ENCODE measurements at regions of chr12 and their contacts with region 1.

Region 1: DNA sequence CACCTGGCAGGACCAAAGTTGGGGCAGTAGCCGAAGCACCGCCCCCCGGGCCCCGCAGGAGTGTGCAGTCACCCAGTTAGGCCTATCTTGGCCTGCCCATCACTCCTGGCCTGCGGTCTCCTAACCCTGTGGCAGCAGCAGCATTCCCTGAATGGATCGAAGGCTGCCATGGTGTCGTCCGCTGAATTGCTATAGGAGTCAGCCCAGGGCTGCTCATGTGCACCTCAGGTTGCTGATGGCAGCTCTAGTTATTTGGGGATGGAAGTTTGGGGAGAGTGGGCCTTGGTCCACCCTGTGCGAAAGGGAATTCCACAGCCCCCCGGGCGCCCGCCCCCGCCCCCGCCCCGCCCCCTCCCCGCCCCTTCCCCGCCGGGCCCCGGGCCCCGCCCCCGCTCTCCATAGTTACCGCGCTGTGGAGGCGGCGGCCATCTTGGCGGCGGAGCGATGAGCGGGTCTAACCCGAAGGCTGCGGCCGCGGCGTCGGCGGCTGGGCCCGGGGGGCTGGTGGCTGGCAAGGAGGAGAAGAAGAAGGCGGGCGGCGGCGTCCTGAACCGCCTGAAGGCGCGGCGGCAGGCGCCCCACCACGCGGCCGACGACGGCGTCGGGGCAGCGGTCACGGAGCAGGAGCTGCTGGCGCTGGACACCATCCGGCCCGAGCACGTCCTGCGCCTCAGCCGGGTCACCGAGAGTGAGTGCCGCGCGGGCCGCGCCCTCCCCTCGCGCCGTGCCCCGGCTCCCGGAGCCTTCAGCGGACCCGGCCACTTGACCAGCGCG is at the start of gene UNC119B:
- DNase-seq: peak; percentile 65 to 96 (median 74)
- ATAC-seq: peak; percentile 89
- H3K4me3 ChIP-seq: peak within 1 kb of the TSS; percentile 84 to 88
- H3K27ac ChIP-seq: peak within 1 kb of the TSS; percentile 83 to 88
- H3K4me1 ChIP-seq: peaks cover 12 to 41% of the 10 kb centered on the region in 2 donors
- H3K27me3 ChIP-seq: no peaks in the 10 kb centered on the region
- CTCF ChIP-seq: no peak
- polyA plus RNA-seq, gene UNC119B: 45.2 to 63.2 (median 55.7) TPM

Region 2: DNA sequence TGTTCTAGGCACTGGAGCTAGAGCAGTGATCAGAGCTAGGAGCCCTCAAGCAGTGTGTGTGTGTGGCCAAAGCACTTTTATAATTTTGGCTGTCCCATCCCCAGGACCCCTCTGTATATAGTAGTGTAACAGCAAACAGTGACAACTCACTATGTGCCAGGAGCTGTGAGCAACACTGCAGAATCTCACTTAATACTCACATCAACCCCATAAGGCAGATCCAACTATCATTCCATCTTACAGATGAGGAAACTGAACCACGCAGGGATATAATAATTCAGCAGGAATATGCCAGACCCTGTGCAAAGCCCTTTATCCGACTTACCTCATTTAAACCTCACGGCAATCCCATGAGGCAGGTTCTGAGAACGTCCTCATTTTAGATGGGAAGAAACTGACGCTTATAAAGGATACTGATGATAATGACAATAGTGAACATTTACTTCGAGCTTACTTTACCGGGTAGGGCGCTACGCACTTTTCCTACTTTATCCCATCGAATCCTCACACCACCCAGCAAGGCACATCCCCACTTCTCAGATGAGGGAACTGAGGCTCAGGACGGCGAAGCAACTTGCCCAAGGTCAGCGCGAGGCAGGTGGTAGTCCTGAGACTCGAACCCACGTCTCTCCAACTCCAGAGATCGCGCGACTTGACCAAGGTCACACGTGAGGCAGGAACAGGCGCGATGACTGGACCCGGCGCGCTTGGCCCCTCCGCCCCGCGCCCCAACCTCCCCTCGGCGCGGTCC is 594.4 kb before region 1 on chr12:
- intact Hi-C with region 1: no loop called
- DNase-seq: peak in 1 of 4 donors; percentile 81
- ATAC-seq: no peak
- H3K4me3 ChIP-seq: peak overlapping the region; percentile 68 to 96
- H3K27ac ChIP-seq: peak overlapping the region; percentile 90 to 96
- H3K4me1 ChIP-seq: peaks cover 23 to 83% of the 10 kb centered on the region in 2 donors
- H3K27me3 ChIP-seq: no peaks in the 10 kb centered on the region
- CTCF ChIP-seq: no peak

Region 3: GRCh38 chr12:120649442-120650232 is 60.6 kb before region 1 on chr12:
- intact Hi-C with region 1: loop called in 1 of 2 experiments (anchors 5 kb)
- DNase-seq: peak in 1 of 4 donors; percentile 37
- ATAC-seq: no peak
- H3K4me3 ChIP-seq: no peak overlapping the region
- H3K27ac ChIP-seq: no peak overlapping the region
- H3K4me1 ChIP-seq: peaks cover 4 to 21% of the 10 kb centered on the region in 2 donors
- H3K27me3 ChIP-seq: peaks cover 6 to 58% of the 10 kb centered on the region in 2 donors
- CTCF ChIP-seq: peak in 1 of 2 donors; percentile 21

Region 4: GRCh38 chr12:120774169-120774916 is 64.1 kb after region 1 on chr12:
- intact Hi-C with region 1: no loop called
- DNase-seq: peak in 1 of 4 donors; percentile 21
- ATAC-seq: peak; percentile 80
- H3K4me3 ChIP-seq: no peak overlapping the region
- H3K27ac ChIP-seq: peak overlapping the region; percentile 26 to 39
- H3K4me1 ChIP-seq: peaks cover 0 to 20% of the 10 kb centered on the region in 2 donors
- H3K27me3 ChIP-seq: no peaks in the 10 kb centered on the region
- CTCF ChIP-seq: no peak